Activated T-helper 1 cell treated with anti-CD3 and anti-CD28 coated beads, Interleukin-12 subunit alpha, Interleukin-12 subunit beta, Interleukin-2, Interleukin-4 antibody, amounts not matched to agents 30 ng/mL and 10 ng/mL and 1 ng/mL, durations not matched to agents 14 hours and 24 hours and 36 hours (primary cell): ENCODE measurements at regions of chrX and their contacts with region 1.

Region 1: GRCh38 chrX:78945186-78945912 is at the start of gene P2RY10:
- DNase-seq: peak; percentile 6
- H3K4me3 Mint-ChIP-seq: peak within 1 kb of the TSS; percentile 98
- H3K27ac Mint-ChIP-seq: peak within 1 kb of the TSS; percentile 97
- H3K4me1 Mint-ChIP-seq: peaks cover 48% of the 10 kb centered on the region
- H3K27me3 Mint-ChIP-seq: no peaks in the 10 kb centered on the region
- total RNA-seq, gene P2RY10: 34.6 and 44.9 TPM in 2 replicates

Region 2: GRCh38 chrX:78346826-78347225 is 598.5 kb before region 1 on chrX:
- intact Hi-C with region 1: no loop called
- DNase-seq: no peak
- H3K4me3 Mint-ChIP-seq: no peak overlapping the region
- H3K27ac Mint-ChIP-seq: no peak overlapping the region
- H3K4me1 Mint-ChIP-seq: no peaks in the 10 kb centered on the region
- H3K27me3 Mint-ChIP-seq: no peaks in the 10 kb centered on the region

Region 3: DNA sequence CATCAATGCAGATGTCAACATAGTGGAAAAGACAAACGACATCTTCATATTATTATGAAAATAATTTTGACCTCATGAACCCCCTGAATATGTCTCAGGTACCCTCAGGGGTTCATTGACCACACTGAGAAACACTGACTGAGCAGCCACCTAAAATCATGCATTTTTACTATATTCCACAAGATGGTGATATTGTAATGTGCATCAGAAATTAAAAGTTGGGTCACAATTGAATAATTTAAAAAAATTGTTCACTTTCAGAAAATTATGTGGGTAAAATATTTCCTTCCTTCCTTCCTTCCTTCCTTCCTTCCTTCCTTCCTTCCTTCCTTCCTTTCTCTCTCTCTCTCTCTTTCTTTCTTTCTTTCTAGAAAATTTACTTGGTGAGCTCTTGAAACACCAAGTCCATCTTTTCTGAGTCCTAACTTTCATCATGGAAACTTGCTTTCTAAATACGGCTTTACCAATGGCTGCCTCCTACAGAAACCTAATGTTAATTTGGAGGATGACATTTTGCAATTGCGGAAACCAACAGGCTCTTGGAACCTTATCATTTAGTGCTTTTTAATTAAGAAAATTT is 389.9 kb before region 1 on chrX:
- intact Hi-C with region 1: loop called (anchors 5 kb)
- DNase-seq: no peak
- H3K4me3 Mint-ChIP-seq: no peak overlapping the region
- H3K27ac Mint-ChIP-seq: peak overlapping the region; percentile 61
- H3K4me1 Mint-ChIP-seq: peaks cover 5% of the 10 kb centered on the region
- H3K27me3 Mint-ChIP-seq: no peaks in the 10 kb centered on the region

Region 4: DNA sequence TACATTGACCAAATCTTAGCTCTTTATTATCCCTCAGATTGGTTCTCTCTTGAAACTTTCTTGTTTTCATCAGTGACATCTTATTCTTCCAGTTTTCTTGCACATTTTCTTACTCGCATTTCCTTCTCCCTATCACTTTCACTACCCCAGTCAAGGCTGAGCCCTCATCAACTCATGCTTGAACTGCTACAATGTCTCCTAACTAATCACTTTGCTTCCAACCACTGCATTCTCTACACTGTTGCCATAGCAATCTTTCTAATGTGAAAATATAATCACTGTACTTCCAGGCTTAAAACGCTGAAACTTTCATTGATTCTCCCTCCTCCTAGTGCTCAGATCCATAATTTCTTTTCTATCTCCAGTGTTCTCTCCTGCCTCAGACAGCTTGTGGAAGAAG is 220.1 kb before region 1 on chrX:
- intact Hi-C with region 1: no loop called
- DNase-seq: no peak
- H3K4me3 Mint-ChIP-seq: no peak overlapping the region
- H3K27ac Mint-ChIP-seq: no peak overlapping the region
- H3K4me1 Mint-ChIP-seq: no peaks in the 10 kb centered on the region
- H3K27me3 Mint-ChIP-seq: peaks cover 2% of the 10 kb centered on the region

Region 5: DNA sequence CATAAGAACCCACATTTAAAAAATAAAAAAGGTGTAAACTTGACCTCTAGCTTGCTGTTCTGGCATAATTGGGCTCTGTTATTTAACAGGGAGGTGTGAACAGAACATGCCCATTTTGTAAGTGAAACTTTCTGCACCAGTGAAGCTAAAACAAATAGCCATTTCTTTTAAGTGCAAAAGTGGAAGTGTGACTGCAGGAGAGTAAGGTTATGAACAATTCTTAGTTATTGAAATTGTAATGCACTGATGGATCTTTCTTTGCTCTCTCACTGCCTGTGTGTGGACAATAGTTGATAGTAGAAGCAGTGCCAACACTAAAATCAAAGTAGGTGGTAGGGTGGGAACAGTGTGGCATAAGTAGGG is 12.4 kb after region 1 on chrX:
- intact Hi-C with region 1: loop called (anchors 1 kb)
- DNase-seq: no peak
- H3K4me3 Mint-ChIP-seq: peak overlapping the region; percentile 42
- H3K27ac Mint-ChIP-seq: peak overlapping the region; percentile 68
- H3K4me1 Mint-ChIP-seq: peaks cover 74% of the 10 kb centered on the region
- H3K27me3 Mint-ChIP-seq: no peaks in the 10 kb centered on the region

Region 6: GRCh38 chrX:79146640-79147390 is 201.5 kb after region 1 on chrX:
- intact Hi-C with region 1: loop called (anchors 2 kb)
- DNase-seq: no peak
- H3K4me3 Mint-ChIP-seq: peak overlapping the region; percentile 99
- H3K27ac Mint-ChIP-seq: peak overlapping the region; percentile 94
- H3K4me1 Mint-ChIP-seq: peaks cover 53% of the 10 kb centered on the region
- H3K27me3 Mint-ChIP-seq: no peaks in the 10 kb centered on the region

Region 7: DNA sequence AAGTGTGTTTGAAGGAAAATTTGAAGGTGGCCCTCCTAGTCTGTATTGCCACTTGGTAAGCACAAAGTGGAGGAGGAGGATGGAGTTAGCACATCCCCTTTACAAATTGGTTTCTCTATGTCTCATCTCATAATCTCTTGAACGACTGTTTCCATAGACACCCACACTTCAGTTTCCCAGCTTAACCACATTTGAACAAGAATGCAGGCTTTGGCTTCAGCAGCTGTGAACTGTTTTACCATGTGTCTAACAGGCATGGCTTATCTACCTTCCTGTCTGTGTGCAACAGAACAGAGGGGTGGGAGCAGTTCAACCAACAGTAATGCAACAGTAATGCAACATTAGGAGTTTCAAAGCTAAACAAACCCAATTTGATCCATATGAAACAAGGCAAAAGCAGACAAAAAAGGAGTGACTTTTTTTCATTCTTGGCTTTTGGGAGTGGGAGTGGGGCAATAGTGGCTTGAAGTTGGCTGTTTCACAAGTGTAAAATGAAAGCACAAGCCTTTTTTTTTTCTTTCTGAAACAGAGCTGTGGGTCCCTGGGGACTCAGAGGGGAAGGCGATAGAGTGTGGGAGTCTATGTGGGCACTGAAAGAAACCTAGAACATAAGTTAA is 313.8 kb after region 1 on chrX:
- intact Hi-C with region 1: loop called (anchors 1 kb)
- DNase-seq: peak; percentile 57
- H3K4me3 Mint-ChIP-seq: peak overlapping the region; percentile 45
- H3K27ac Mint-ChIP-seq: peak overlapping the region; percentile 87
- H3K4me1 Mint-ChIP-seq: peaks cover 86% of the 10 kb centered on the region
- H3K27me3 Mint-ChIP-seq: no peaks in the 10 kb centered on the region